A673 (cell line): ENCODE measurements at regions of chr16 and their contacts with region 1.

Region 1: DNA sequence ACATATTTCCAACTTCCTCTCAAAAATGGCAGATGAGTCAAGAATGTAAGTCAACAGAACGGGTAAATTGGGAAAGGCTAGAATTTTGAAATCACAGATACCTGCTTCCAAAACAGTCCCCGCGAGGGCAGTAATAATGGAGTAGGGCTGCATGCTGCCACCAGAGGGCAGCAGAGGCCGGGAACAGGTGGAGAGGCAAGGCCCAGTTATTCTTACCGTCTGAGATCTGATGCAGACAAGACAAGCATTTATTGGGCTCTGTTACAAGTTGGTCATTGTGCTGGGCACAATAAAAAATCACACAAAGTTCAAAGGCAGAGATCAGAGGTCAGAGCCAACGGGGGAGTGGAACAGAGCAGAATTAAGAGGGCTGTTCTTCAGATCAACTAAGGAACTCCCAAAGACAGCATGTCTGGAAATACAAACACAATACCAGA is 8.8 kb upstream of the MLKL start:
- DNase-seq: peak; percentile 84
- H3K4me3 ChIP-seq: no peak overlapping the region
- H3K27ac ChIP-seq: no peak overlapping the region
- H3K4me1 ChIP-seq: no peaks in the 10 kb centered on the region
- H3K27me3 ChIP-seq: no peaks in the 10 kb centered on the region
- CTCF ChIP-seq: peak; percentile 99

Region 2: DNA sequence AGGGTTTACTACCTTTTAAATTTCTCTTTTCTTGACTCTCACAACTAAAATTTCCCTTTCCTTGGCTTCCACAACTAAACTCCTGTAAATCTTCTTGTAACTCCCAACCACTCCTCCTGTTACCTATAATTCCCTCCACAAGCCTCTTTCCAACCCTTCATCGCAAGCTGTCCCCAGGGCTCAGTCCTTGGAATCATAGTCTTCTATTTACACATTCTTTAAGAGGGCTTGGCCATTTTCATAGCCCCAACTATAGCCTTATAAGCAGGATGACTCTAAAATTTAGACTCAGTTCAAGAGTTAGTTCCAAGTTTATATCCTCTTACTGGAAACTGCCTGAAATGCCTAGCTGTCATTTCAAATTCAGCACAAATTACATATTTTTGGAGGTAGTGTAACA is 126.5 kb before region 1 on chr16:
- CTCF ChIA-PET with region 1: no interaction called
- POLR2A ChIA-PET with region 1: no interaction called
- intact Hi-C with region 1: no loop called
- DNase-seq: no peak
- H3K4me3 ChIP-seq: no peak overlapping the region
- H3K27ac ChIP-seq: peak overlapping the region; percentile 27
- H3K4me1 ChIP-seq: peaks cover 69% of the 10 kb centered on the region
- H3K27me3 ChIP-seq: no peaks in the 10 kb centered on the region
- CTCF ChIP-seq: no peak

Region 3: DNA sequence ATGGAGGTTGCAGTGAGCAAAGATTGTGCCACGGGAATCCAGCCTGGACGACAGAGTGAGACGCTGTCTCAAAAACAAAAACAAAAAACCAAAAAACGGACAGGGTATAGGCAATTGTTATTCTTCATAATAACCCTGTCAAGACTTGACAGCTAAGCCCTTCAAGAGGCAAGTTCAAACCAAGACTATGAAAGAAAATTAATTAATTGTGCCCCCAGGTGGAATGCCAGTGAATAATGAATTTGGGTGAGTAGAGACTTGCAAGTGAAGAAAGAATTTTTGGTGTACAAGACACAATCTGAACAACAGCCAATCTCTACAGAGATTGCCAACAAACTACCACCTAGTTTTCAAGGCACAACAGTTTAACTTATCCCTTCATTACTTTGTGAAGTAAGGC is 49.1 kb before region 1 on chr16:
- CTCF ChIA-PET with region 1: no interaction called
- POLR2A ChIA-PET with region 1: no interaction called
- intact Hi-C with region 1: no loop called
- DNase-seq: no peak
- H3K4me3 ChIP-seq: no peak overlapping the region
- H3K27ac ChIP-seq: peak overlapping the region; percentile 14
- H3K4me1 ChIP-seq: peaks cover 10% of the 10 kb centered on the region
- H3K27me3 ChIP-seq: no peaks in the 10 kb centered on the region
- CTCF ChIP-seq: no peak

Region 4: DNA sequence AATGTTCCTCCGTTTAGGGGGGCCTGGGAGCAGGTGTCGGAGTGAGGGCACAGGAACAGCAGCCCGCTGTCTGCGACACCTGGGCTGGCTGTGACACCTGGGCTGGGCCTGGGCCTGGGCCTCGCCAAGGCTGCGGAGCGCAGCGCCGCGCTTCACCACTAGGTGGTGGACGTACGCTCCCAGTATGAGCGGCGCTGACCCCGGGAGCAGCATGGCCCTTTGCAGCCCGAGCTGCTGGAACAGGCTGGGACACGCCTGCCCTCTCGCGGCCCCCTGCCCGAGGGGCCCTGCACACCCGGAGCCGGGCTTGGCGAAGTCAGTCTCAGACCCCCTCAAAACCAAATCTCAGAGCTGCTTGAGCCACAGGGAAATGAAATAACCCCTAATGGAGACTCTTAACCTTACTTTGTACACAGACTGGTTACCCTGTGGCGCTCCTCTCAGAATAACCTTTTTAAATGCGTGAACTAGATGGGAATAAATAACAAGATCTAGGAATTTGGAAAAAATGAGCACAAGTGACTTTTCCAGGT is 103.7 kb after region 1 on chr16:
- CTCF ChIA-PET with region 1: no interaction called
- POLR2A ChIA-PET with region 1: no interaction called
- intact Hi-C with region 1: loop called (anchors 2 kb)
- DNase-seq: peak; percentile 78
- H3K4me3 ChIP-seq: no peak overlapping the region
- H3K27ac ChIP-seq: no peak overlapping the region
- H3K4me1 ChIP-seq: no peaks in the 10 kb centered on the region
- H3K27me3 ChIP-seq: no peaks in the 10 kb centered on the region
- CTCF ChIP-seq: peak; percentile 93